ENCODE measurements at regions of chr15 and their contacts with region 1.

Region 1: GRCh38 chr15:38474155-38474757 is 20.3 kb downstream of the FAM98B start:
- DNase-seq: peak; percentile 63
- ATAC-seq: peak; percentile 89
- H3K4me3 ChIP-seq: no peak overlapping the region
- H3K27ac ChIP-seq: no peak overlapping the region
- H3K4me1 ChIP-seq: no peaks in the 10 kb centered on the region
- H3K27me3 ChIP-seq: no peaks in the 10 kb centered on the region
- CTCF ChIP-seq: peak; percentile 82
- EP300 ChIP-seq: no peak
- POLR2A ChIP-seq: no peak
- RAD21 ChIP-seq: no peak

Region 2: DNA sequence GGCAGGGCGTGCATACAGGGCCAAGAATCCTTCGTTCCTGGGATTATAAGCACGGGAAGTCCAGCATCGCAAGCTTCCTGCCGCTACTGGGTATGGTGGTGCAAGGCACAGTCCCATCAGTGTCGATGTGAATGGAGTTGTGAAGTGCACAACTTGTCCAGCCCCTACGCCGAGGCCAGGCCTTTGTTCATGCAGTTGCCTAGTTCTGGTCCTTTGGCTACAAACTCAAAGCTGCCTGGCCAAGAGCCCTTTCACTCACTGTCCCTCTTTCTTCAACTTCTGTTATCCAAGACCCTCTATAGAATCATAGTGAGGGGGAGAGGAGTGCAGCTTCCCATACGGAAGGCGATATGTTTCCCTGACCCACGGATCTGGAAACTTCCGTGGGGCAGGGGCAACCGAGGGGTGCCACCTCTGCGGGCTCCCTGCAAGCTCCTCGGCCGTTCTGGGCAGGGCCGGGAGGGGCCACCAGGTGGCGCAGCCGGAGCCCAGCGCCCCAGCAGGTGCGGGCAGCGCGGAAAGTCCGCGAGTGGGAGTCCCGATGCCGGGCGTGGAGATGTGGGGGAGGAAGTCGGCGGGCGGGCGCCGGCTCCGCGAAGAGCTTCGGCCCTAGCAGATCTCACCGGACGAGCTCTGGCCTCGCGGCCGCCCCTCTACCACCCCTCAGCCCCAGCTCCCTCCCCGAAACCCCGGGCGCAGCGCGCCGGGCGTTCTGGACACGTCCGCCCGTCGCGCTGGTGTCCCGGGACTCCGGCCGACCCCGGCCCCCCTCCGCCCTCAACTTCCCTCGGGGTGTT is 89.7 kb after region 1 on chr15:
- CTCF ChIA-PET with region 1: no interaction called
- POLR2A ChIA-PET with region 1: no interaction called
- in situ Hi-C with region 1: no loop called
- intact Hi-C with region 1: loop called (anchors 10 kb)
- DNase-seq: no peak
- ATAC-seq: peak; percentile 94
- H3K4me3 ChIP-seq: peak overlapping the region; percentile 47 to 69 (median 59)
- H3K27ac ChIP-seq: no peak overlapping the region
- H3K4me1 ChIP-seq: no peaks in the 10 kb centered on the region
- H3K27me3 ChIP-seq: peaks cover 3 to 32% of the 10 kb centered on the region in 2 experiments; a peak in 4 of 5 replicates
- CTCF ChIP-seq: peak; percentile 81
- EP300 ChIP-seq: no peak
- POLR2A ChIP-seq: no peak
- RAD21 ChIP-seq: peak; percentile 57

Region 3: DNA sequence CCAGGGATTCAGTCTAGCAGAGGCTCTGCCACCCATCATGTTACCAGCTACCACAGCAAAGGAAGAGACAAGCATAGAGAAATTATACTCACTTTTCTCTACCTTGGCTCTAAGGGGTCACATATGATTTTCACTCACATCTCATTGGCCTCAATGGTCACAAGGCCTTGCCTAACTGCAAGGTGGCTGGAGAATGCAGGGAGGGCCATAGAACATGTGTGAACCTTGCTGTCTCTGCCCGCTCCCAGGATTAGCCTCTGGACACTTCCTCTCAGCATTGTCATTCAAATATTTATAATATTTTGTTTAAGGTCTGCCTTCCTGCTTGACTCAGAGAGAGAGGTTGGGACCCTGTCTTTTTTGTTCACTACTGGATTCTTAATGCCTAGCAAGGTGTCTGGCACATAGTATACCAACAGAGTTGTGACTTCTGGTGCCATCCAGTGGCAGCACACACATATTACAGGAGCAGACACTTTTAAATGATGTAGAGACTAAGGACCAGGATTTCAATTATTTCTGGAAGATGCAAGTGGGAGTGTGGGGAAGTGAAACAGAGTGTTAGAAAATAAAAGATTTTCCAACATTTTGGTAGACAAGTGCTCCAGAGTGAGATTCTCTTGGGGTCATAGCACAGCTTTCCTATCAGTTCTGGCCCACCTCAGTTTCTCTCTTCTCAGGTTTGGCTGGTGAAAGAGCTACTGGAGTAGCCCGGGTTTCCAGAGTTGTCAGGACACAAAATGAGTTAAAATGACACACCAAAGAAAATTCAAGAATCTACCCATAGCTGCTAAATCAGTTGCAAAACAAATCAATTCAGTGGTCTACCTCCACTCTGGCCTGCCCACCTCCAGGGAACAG is 209.4 kb after region 1 on chr15:
- CTCF ChIA-PET with region 1: interaction called, 10 read pairs
- POLR2A ChIA-PET with region 1: no interaction called
- in situ Hi-C with region 1: loop called (anchors 10 kb)
- intact Hi-C with region 1: loop called (anchors 1 kb)
- DNase-seq: peak; percentile 27
- ATAC-seq: peak; percentile 84
- H3K4me3 ChIP-seq: no peak overlapping the region
- H3K27ac ChIP-seq: no peak overlapping the region
- H3K4me1 ChIP-seq: no peaks in the 10 kb centered on the region
- H3K27me3 ChIP-seq: no peaks in the 10 kb centered on the region; a peak in 1 of 5 replicates
- CTCF ChIP-seq: peak; percentile 75
- EP300 ChIP-seq: no peak
- POLR2A ChIP-seq: no peak
- RAD21 ChIP-seq: no peak

Region 4: DNA sequence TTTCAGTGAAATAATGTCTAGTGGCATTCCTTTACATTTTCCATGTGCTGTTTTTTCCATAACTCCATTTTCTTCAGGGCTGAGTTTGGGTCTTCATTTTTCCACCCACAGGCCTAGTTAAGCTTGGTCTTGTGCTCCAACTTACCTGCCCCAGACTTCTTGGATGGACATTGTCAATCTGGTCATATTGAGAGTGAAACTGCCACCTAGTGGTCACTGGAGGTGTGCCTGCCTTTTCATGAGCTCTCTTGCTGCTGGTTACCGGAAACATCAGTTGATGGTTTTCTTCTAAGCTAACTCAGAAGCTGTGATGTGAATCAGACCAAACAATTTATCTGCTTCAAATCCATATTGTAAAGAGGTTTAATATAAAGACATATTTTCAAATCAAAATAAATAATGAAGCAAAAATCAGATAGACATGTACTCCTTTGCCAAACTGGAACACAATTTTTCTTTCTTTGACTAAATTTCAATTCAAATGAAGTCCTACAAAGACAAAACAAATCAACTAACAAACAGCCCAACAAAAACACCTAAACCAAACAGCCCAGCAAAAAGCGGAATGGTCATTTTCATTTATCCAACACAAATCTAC is 225.5 kb after region 1 on chr15:
- CTCF ChIA-PET with region 1: interaction called, 8 read pairs
- POLR2A ChIA-PET with region 1: no interaction called
- in situ Hi-C with region 1: no loop called
- intact Hi-C with region 1: loop called (anchors 1 kb)
- DNase-seq: peak; percentile 44
- ATAC-seq: peak; percentile 83
- H3K4me3 ChIP-seq: no peak overlapping the region
- H3K27ac ChIP-seq: no peak overlapping the region
- H3K4me1 ChIP-seq: peaks cover 13% of the 10 kb centered on the region
- H3K27me3 ChIP-seq: peaks cover 2 to 3% of the 10 kb centered on the region in 2 experiments; a peak in 1 of 5 replicates
- CTCF ChIP-seq: peak; percentile 75
- EP300 ChIP-seq: no peak
- POLR2A ChIP-seq: no peak
- RAD21 ChIP-seq: no peak